Calu3 (cell line): ENCODE measurements at regions of chr13 and their contacts with region 1.

Region 1: DNA sequence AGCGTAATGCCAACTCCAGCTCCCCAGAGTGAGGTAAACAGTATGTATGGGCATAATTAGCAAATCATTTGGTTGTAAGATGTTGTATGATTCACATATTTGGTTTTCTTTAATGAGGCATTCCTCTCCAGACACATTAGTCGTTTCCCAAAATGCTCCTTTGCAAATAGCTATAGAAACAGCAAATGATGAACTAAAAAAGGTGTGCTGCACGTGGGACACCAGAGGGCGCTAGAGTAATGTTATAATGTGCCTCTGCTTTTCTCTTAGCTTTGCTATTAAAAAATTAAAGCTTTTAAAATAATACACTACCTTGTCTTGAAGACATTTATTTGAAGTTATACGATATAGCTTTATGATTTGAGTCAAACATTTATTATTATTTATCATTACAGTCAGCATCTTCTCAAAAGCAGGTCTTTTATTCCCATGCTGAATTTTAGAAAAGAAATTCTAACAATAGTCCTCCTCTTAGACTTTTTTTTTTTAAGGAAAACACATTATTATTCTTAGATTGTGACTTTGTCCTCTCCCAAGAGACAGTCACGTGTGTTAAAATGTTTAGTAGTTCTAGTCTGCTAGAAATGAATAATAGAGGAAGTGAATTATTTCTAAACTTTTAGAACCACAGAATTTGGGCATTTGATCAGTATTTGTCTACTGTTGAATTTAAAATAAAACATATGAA is 121.6 kb upstream of the FRY start:
- DNase-seq: peak; percentile 56
- H3K4me3 Mint-ChIP-seq: no peak overlapping the region
- H3K27ac Mint-ChIP-seq: no peak overlapping the region
- H3K4me1 Mint-ChIP-seq: no peaks in the 10 kb centered on the region
- H3K27me3 Mint-ChIP-seq: no peaks in the 10 kb centered on the region
- CTCF ChIP-seq: peak; percentile 45

Region 2: DNA sequence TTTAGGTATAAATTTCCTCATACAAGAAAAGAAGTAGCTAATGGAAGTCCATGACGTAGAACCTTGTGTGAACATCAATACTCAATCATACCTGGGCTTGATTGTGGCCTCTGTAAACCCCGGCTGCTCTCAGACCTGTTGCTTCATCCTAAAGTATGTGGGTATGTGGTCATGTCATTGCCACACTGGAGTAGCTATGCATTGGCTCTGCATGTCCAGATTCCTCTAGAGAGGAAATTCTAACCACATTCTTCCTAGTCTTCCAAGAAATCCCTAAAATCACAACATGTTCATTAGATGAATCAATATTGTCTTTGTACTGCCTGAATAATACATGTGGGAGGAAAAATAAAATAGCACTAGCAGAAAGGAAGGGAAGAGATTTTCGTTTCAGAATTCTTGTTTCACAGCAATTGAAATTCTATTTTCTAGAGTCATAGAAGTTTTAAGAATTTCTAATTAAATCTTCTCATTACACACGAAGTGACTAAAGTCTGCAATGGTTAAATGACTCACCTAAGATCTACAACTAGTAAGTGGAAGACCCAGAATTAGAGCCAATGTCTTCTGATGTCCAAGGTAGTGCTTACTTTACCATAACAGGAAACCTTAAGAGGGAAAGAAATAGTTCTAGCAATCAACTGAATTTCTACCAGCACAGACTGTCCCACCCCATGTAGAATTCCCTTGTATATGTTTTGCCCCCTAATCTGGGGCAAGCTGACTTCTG is 142.7 kb before region 1 on chr13:
- CTCF ChIA-PET with region 1: no interaction called
- intact Hi-C with region 1: no loop called
- DNase-seq: no peak
- H3K4me3 Mint-ChIP-seq: no peak overlapping the region
- H3K27ac Mint-ChIP-seq: no peak overlapping the region
- H3K4me1 Mint-ChIP-seq: no peaks in the 10 kb centered on the region
- H3K27me3 Mint-ChIP-seq: peaks cover 21% of the 10 kb centered on the region
- CTCF ChIP-seq: no peak

Region 3: GRCh38 chr13:31945202-31945978 is 35.4 kb after region 1 on chr13:
- CTCF ChIA-PET with region 1: interaction called, 8 read pairs
- intact Hi-C with region 1: loop called (anchors 1 kb)
- DNase-seq: peak; percentile 46
- H3K4me3 Mint-ChIP-seq: peak overlapping the region; percentile 78
- H3K27ac Mint-ChIP-seq: peak overlapping the region; percentile 51
- H3K4me1 Mint-ChIP-seq: peaks cover 51% of the 10 kb centered on the region
- H3K27me3 Mint-ChIP-seq: no peaks in the 10 kb centered on the region
- CTCF ChIP-seq: no peak

Region 4: DNA sequence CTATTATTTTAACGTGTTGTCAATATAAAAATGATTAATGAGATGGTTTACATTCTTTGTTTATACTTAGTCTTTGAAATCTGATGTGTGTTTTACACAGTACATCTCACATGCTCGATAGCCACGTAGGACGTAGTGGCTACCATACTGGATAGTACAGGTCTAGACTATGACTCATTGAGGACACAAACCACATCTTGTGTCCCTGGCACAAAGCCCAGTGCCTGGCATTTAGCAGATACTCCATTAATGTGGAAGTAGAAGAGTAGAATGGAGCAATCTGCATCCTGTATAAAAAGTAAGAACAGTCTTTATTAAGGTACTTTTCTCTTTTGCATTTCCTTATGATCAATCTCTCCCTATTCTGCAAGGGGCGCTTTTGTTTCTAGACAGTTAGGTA is 72.5 kb after region 1 on chr13:
- CTCF ChIA-PET with region 1: interaction called, 3 read pairs
- intact Hi-C with region 1: loop called (anchors 5 kb)
- DNase-seq: peak; percentile 83
- H3K4me3 Mint-ChIP-seq: peak overlapping the region; percentile 9
- H3K27ac Mint-ChIP-seq: peak overlapping the region; percentile 71
- H3K4me1 Mint-ChIP-seq: peaks cover 19% of the 10 kb centered on the region
- H3K27me3 Mint-ChIP-seq: no peaks in the 10 kb centered on the region
- CTCF ChIP-seq: no peak

Region 5: GRCh38 chr13:32164622-32165268 is 254.7 kb after region 1 on chr13:
- CTCF ChIA-PET with region 1: interaction called, 8 read pairs
- intact Hi-C with region 1: loop called (anchors 5 kb)
- DNase-seq: peak; percentile 42
- H3K4me3 Mint-ChIP-seq: no peak overlapping the region
- H3K27ac Mint-ChIP-seq: no peak overlapping the region
- H3K4me1 Mint-ChIP-seq: no peaks in the 10 kb centered on the region
- H3K27me3 Mint-ChIP-seq: no peaks in the 10 kb centered on the region
- CTCF ChIP-seq: peak; percentile 38

Region 6: DNA sequence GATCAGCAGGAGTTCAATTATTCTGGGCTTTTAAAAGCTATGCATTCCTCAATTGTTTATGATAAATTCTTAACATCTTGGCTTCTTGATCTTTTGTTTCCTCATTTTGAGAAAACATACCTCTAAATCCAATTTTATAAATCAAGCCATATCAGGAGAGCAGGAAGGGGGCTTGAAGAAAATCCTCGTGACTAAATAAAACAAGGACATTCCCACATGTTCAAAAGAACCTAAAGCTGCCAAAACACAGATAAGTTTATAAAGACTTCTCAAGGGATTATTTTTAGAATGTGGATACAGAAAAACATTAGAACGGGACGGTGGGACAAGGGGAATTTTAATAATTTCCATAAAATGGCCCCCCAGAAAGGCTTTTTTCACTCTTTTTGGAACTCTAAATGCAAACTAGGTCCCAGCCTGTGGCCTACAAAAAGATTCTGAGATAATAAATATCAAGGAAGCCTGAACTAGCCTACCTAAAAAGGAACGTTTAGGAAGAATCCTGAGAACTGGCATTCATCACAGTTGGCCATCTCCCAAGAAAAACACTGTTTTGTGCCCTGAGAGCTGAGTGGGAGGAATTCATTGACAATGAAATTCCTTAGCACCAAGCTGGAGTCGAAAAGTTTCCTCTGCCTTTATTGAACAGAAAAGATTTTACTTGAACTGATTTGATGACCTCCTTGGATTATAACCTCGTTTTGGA is 375.1 kb after region 1 on chr13:
- CTCF ChIA-PET with region 1: no interaction called
- intact Hi-C with region 1: no loop called
- DNase-seq: peak; percentile 13
- H3K4me3 Mint-ChIP-seq: no peak overlapping the region
- H3K27ac Mint-ChIP-seq: no peak overlapping the region
- H3K4me1 Mint-ChIP-seq: no peaks in the 10 kb centered on the region
- H3K27me3 Mint-ChIP-seq: no peaks in the 10 kb centered on the region
- CTCF ChIP-seq: no peak

Region 7: GRCh38 chr13:32310134-32310706 is 400.2 kb after region 1 on chr13:
- CTCF ChIA-PET with region 1: interaction called, 3 read pairs
- intact Hi-C with region 1: loop called (anchors 2 kb)
- DNase-seq: peak; percentile 21
- H3K4me3 Mint-ChIP-seq: no peak overlapping the region
- H3K27ac Mint-ChIP-seq: no peak overlapping the region
- H3K4me1 Mint-ChIP-seq: no peaks in the 10 kb centered on the region
- H3K27me3 Mint-ChIP-seq: no peaks in the 10 kb centered on the region
- CTCF ChIP-seq: peak; percentile 50